A549 (cell line): ENCODE measurements at regions of chr12 and their contacts with region 1.

Region 1: GRCh38 chr12:121494093-121494787 is 86.6 kb downstream of the KDM2B start:
- DNase-seq: peak; percentile 49 to 57
- ATAC-seq: peak; percentile 51 to 84; a peak in 4 of 6 replicates
- H3K4me3 ChIP-seq: no peak overlapping the region
- H3K27ac ChIP-seq: no peak overlapping the region
- H3K4me1 ChIP-seq: no peaks in the 10 kb centered on the region
- CTCF ChIP-seq: peak; percentile 87
- EP300 ChIP-seq: no peak
- POLR2A ChIP-seq: no peak
- RAD21 ChIP-seq: peak; percentile 32 to 54; a peak in 3 of 5 replicates

Region 2: DNA sequence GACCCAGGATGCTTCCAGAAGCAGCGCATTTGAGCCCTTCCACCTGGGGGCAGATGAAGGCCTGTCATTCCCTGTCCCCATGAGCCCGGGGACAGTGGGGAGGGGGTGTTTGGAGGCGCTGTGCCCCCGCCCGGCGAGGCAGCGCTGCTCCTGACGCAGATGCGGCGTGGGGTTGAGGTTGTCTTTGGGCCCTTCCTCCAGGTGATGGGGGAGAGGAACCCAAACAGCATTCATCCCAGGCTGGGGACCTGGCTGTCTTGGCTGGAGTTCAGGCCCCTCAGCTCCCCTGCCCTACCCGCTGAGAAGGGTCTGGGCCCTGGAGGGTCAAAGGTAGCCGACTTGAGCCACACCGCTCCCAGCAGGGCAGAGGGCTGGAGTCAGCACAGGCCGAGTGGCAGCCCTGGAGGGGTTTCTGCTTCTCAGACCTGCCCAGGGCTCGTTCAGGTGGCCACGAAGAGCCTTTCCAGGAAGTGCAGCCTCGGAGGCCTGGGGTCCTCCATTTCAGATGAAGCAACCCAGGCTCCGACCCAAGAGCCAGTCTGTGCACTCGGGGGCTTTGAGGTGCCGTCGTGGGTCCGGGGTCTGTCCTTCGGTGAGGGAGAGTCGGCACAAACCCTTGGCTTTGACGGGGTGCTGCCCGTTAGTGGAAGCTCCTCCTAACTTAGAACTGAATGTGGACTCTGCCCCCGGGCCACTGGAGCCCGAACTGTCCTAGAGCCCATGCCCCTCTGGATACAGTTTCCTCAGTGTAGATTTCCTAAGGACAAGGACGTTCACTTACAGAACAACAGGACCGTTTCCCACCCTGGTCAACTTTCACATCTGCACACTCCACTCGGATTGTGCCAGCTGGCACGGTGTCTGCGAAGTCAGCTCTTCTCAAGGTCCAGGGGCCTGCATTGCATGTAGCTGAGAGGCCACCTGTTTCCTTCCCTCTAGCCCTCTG is 752.5 kb before region 1 on chr12:
- CTCF ChIA-PET with region 1: no interaction called
- POLR2A ChIA-PET with region 1: no interaction called
- DNase-seq: no peak
- ATAC-seq: no peak
- H3K4me3 ChIP-seq: no peak overlapping the region
- H3K27ac ChIP-seq: no peak overlapping the region
- H3K4me1 ChIP-seq: no peaks in the 10 kb centered on the region
- CTCF ChIP-seq: no peak
- EP300 ChIP-seq: no peak
- POLR2A ChIP-seq: no peak
- RAD21 ChIP-seq: no peak

Region 3: GRCh38 chr12:121038861-121039666 is 455.2 kb before region 1 on chr12 and contains the start of gene OASL:
- CTCF ChIA-PET with region 1: no interaction called
- POLR2A ChIA-PET with region 1: no interaction called
- DNase-seq: peak in 1 of 2 experiments; percentile 55
- ATAC-seq: peak; percentile 85 to 90
- H3K4me3 ChIP-seq: peak within 1 kb of the TSS; percentile 50
- H3K27ac ChIP-seq: peak within 1 kb of the TSS; percentile 34 to 79
- H3K4me1 ChIP-seq: peaks cover 15% of the 10 kb centered on the region
- CTCF ChIP-seq: no peak
- EP300 ChIP-seq: no peak
- POLR2A ChIP-seq: no peak
- RAD21 ChIP-seq: no peak
- polyA plus RNA-seq, gene OASL: 0.61 and 0.81 TPM in 2 replicates

Region 4: DNA sequence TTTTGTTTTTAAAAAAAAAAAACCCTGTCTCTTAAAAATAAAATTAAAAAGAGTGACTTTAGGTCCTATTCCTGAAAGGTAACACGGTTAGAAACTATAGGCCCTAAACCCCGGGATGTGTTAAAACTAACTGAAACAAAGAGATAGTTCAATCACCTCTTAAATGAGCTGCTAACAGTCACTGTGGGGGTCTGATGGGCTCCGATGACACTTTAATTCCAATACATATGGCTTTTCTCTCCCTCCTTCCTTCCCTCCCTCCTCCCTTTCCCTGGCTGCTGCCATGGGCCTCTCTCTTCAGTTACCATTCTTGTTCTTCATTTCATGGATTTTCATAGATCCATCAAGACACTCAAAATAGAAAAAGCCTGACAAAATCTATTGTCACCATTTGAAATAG is 17.8 kb before region 1 on chr12:
- CTCF ChIA-PET with region 1: interaction called, 79 read pairs
- POLR2A ChIA-PET with region 1: no interaction called
- DNase-seq: no peak
- ATAC-seq: no peak
- H3K4me3 ChIP-seq: no peak overlapping the region
- H3K27ac ChIP-seq: no peak overlapping the region
- H3K4me1 ChIP-seq: no peaks in the 10 kb centered on the region
- CTCF ChIP-seq: no peak
- EP300 ChIP-seq: no peak
- POLR2A ChIP-seq: no peak
- RAD21 ChIP-seq: no peak

Region 5: GRCh38 chr12:121678716-121679580 is 184.7 kb after region 1 on chr12:
- CTCF ChIA-PET with region 1: interaction called, 40 read pairs
- POLR2A ChIA-PET with region 1: no interaction called
- DNase-seq: no peak
- ATAC-seq: peak; percentile 13 to 21; a peak in 3 of 6 replicates
- H3K4me3 ChIP-seq: no peak overlapping the region
- H3K27ac ChIP-seq: no peak overlapping the region
- H3K4me1 ChIP-seq: no peaks in the 10 kb centered on the region
- CTCF ChIP-seq: no peak
- EP300 ChIP-seq: no peak
- POLR2A ChIP-seq: no peak
- RAD21 ChIP-seq: no peak